OCI-LY7 (cell line): ENCODE measurements at regions of chr5 and their contacts with region 1.

Region 1: GRCh38 chr5:173745123-173745522 is 128.7 kb upstream of the BOD1 start:
- DNase-seq: peak; percentile 99
- H3K4me3 ChIP-seq: peak overlapping the region; percentile 62
- H3K27ac ChIP-seq: peak overlapping the region; percentile 99
- H3K4me1 ChIP-seq: peaks cover 79% of the 10 kb centered on the region
- CTCF ChIP-seq: no peak

Region 2: DNA sequence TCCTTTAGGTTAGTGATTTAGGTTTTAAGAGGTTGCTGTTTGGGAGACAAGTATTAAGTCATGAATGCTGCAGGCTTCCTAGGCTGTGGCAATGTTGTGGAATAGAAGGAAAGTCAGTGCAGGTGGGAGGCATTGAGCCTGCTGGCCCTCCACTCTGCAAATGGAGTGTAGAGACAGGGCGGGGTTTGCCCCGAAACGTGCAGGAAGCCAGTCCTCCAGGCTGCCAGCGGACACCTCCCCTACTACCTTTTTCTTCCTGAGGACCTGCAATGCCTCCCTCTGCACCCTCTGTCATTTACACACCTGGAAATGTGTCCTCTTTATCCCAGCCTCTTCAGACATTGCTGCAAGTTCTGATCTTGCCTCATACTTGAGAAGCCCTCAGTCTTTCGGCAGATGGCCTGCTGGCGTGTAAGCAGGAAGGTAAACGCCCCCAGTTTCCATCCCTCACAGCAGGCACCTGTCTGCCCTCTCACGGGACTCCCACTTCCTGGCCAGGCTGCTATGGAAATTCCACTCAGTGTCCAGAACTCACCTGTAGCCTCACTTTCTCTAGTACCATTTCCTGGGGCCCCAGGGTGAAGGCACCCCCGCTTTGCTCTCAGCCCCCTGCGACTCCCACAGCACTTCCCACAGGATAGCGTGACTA is 47.1 kb before region 1 on chr5:
- CTCF ChIA-PET with region 1: no interaction called
- POLR2A ChIA-PET with region 1: interaction called, 30 read pairs
- intact Hi-C with region 1: loop called (anchors 2 kb)
- DNase-seq: peak; percentile 83
- H3K4me3 ChIP-seq: peak overlapping the region; percentile 46
- H3K27ac ChIP-seq: peak overlapping the region; percentile 80
- H3K4me1 ChIP-seq: peaks cover 68% of the 10 kb centered on the region
- CTCF ChIP-seq: no peak

Region 3: DNA sequence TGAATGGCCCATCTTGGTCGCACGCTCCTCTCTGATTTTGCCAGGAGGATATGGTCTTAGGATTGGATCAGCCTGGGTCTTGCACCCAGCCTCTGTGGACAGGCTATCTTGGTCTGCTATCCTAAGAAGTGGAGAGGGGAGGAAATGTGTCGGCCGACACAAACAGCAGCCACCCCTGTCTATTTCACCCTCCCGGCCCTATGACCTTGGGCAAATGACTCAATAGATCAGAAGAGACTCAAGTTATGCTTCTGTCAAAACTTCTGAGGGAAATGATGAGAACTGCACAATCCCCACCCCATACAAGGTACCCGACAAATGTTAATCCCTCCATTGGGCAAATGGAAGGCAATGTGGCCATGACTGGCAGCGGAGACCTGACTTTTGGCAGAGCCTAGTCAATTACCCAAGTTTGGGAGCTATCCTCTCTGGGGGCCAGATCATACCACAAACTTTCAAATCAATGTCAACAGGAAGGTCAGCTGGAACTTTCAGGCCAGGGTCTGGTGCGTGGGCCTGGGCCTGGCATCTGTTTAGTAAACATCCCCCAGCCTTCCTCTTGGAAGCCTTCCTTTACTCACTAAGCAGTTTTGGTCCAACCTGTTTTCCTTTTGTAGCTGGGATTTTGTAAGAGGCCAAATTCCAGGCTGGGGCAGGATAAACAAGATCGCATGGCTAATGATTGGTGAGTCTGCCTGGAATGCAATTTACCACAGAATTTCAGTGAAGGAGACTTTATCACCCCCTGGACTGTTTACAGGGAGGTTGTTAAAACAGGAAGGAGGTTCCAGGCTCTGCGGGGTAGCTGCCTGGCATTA is 78.8 kb after region 1 on chr5:
- CTCF ChIA-PET with region 1: interaction called, 7 read pairs
- POLR2A ChIA-PET with region 1: interaction called, 65 read pairs
- intact Hi-C with region 1: loop called (anchors 1 kb)
- DNase-seq: no peak
- H3K4me3 ChIP-seq: peak overlapping the region; percentile 27
- H3K27ac ChIP-seq: peak overlapping the region; percentile 99
- H3K4me1 ChIP-seq: peaks cover 84% of the 10 kb centered on the region
- CTCF ChIP-seq: no peak

Region 4: GRCh38 chr5:173895401-173896165 is 150.5 kb after region 1 on chr5:
- CTCF ChIA-PET with region 1: no interaction called
- POLR2A ChIA-PET with region 1: interaction called, 16 read pairs
- intact Hi-C with region 1: no loop called
- DNase-seq: no peak
- H3K4me3 ChIP-seq: peak overlapping the region; percentile 88
- H3K27ac ChIP-seq: peak overlapping the region; percentile 88
- H3K4me1 ChIP-seq: peaks cover 55% of the 10 kb centered on the region
- CTCF ChIP-seq: no peak

Region 5: DNA sequence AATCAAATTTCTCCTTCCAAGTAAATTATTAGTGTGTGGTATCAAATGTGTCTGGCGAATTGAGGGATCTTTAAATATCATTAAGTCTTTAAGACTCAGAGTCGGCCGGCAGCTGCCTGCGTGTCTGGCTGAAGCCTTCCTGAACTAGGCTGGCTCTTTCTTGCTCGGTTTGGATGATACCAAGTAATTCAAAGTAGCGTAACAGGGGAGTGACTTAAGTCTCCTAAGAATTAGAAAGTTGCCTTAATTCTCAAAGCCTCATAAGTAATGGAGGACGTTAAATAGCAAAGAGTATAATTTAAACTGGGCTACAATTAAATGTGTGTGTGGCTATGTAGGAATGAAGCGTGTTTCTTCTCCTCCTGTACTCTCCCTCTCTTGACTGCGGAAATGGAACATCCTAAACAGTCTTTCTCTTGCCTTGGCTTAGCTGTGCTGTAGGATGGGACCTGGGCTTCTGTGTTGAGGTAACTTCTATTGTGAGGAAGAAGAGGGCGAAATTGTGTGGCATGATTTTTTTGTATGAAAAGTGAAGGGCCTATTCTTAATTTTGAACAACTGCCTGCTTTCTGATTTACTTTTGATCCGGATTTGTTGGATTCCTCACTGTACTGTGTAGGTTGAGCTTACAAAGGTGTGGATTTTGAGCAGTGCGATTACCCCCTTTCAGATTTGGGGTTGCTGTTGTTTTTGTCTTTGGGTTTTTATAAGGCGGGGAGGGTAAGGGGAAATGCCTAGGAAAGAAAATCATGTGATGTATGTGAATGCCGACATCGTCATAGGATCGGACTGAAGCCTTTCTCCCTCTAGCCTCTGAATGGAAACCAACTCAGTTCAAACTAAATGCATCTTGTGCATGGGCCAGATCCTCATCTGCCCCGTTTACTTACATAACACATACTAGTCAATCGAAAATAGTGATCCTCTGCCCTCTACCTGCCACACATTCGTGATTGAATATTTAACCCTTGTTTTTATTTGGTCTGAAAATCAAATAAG is 173.0 kb after region 1 on chr5:
- CTCF ChIA-PET with region 1: no interaction called
- POLR2A ChIA-PET with region 1: interaction called, 11 read pairs
- intact Hi-C with region 1: loop called (anchors 1 kb)
- DNase-seq: peak; percentile 93
- H3K4me3 ChIP-seq: peak overlapping the region; percentile 72
- H3K27ac ChIP-seq: peak overlapping the region; percentile 88
- H3K4me1 ChIP-seq: peaks cover 91% of the 10 kb centered on the region
- CTCF ChIP-seq: peak; percentile 69